ENCODE measurements at regions of chr15 and their contacts with region 1.

Region 1: DNA sequence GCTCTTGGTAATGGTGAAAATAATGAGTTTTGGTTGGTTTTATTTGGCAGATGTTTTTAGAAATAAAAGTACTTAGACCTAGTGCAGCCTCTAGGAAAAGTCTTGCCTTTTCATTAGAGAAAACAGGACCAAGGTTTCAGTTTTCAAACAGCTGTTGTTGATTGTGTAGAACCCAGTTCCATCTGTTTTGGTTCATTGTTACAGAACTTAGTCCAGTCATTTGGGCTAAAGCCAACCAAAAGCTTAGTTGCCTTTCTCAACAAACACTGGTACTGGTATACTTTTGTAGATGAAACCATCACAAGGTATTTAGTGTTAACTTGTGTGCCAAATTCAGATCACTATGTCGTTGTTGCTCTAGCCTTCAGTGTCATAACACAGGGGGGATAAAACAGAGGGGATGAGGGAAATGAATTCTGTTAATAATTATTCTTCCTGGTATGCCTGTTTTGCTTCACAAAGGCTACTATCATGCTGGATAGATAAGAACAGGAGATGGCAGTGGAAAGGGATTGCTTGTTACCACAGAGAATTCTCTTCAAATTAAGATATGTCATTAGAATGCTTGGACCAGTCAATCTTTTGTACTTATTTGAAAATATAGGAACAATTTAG is 12.6 kb upstream of the APH1B start:
- DNase-seq: no peak

Region 2: GRCh38 chr15:63166219-63166618 is 98.6 kb before region 1 on chr15:
- intact Hi-C with region 1: loop called in 1 of 2 experiments (anchors 10 kb)
- DNase-seq: no peak

Region 3: DNA sequence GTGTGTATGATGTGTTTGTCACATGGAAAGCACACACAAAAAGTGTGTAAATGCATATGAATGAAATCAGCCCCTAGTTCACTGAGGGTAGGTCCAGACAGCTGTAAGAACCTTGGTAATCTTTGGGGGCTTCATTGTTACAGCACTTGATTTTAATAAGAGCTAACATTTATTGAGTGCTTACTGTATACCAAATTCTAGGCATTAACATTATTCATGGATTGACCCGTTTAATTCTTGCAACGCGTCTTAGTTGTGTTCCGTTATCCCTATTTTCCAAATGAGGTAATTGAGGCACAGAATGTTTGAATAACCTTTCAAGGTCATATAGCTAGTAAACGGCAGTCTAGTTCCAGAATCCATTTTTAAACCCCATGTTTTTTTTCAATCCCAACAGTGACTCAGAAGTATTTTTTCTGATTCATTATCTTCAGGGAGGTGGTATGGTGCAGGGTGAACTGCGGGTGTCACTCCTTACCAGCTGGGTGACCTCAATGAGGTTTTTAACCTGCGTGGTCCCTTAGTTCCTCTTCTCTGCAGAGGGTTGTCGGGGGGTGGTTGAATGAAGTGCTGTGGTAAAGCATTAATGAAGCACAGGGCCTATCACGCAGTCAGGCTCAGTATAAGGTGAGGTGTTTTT is 61.2 kb before region 1 on chr15:
- intact Hi-C with region 1: no loop called
- DNase-seq: no peak

Measured in posterior vena cava (tissue), 2 donors.